Mammary epithelial cell (primary cell): ENCODE measurements at regions of chr2 and their contacts with region 1.

Region 1: GRCh38 chr2:100902833-100903405 is 83.0 kb downstream of the NPAS2 start:
- DNase-seq: peak; percentile 92
- H3K4me3 ChIP-seq: no peak overlapping the region
- H3K27ac ChIP-seq: peak overlapping the region; percentile 50
- H3K4me1 ChIP-seq: peaks cover 46% of the 10 kb centered on the region
- H3K27me3 ChIP-seq: no peaks in the 10 kb centered on the region
- CTCF ChIP-seq: peak in 1 of 2 donors; percentile 8

Region 2: GRCh38 chr2:100857915-100858314 is 45.0 kb before region 1 on chr2:
- CTCF ChIA-PET with region 1: no interaction called
- dilution Hi-C with region 1: no loop called
- in situ Hi-C with region 1: no loop called
- intact Hi-C with region 1: loop called (anchors 5 kb)
- DNase-seq: no peak
- H3K4me3 ChIP-seq: no peak overlapping the region
- H3K27ac ChIP-seq: no peak overlapping the region
- H3K4me1 ChIP-seq: no peaks in the 10 kb centered on the region
- H3K27me3 ChIP-seq: no peaks in the 10 kb centered on the region
- CTCF ChIP-seq: no peak

Region 3: DNA sequence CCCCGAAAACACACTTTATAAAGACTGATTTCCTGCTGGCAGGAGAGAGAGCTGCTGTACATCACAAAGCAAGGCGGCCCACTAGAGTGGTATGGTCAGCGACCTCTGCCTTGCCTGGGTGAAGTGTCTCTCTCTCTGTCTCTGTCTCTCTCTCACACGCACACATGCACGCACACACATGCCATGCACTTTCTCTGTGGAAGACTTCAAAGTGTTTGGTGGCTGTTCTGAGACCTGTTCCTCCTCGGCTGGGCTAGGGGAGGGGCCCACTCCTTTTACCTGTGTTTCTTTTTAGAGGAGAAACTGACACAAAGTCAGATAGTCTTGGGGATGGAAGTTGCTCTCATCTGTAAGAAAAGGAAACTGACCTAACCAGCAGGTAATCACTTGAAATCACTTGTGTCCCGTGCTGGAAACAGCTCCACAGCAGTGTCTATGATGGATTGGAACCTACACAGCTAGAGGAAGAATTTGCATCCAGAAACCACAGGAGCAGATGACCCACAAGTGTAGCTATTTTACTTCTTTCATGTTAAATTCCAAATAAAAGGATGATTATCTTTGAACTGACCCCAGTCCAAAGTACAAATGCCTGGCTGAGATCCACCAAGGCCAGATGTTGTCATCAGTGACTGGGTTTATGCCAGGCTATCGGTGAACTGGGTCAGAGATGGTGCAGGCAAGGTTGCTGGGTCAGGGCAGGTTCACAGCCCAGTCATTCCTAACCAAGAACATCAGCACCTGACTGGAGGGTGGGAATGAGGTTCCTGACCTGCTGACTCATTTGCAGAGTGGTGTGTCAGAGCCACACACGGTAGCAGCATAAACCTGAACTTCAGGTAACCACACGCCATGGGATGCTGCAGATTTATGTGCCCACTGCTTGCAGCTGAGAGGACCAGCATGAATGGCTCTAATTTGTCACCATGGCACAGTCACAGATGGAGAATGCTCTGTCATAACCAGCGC is 20.0 kb before region 1 on chr2:
- CTCF ChIA-PET with region 1: no interaction called
- dilution Hi-C with region 1: no loop called
- in situ Hi-C with region 1: no loop called
- intact Hi-C with region 1: loop called (anchors 1 kb)
- DNase-seq: peak; percentile 91
- H3K4me3 ChIP-seq: no peak overlapping the region
- H3K27ac ChIP-seq: peak overlapping the region; percentile 3
- H3K4me1 ChIP-seq: peaks cover 19% of the 10 kb centered on the region
- H3K27me3 ChIP-seq: no peaks in the 10 kb centered on the region
- CTCF ChIP-seq: no peak